ENCODE measurements at regions of chr7 and their contacts with region 1.

Region 1: DNA sequence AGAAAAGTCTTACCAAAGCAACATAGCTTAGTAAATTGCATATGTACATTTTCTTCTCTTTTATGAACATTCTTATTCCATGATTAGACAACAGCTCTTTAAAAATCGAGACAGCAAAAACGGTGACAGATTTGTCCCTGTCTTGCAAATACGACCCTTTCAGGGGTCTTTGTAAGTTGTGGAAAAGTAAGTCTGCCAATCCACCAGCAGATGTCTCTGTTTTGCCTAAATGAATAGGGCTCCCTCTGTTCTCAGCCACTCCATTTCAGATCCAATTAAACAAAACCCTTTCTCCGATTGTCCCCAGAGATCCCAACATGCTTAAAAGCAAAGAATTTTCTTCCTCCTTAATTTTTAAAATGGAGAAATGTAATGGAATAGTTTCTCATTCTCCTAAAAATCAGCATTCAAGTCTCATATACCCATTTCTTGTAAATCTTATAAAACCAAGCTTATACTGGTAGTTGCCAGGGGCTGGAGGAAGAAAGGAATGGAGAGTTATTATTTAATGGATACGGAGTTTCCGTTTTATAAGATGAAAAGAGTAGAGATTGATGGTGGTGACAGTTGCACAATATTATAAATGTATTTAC is 61.0 kb upstream of the NFE2L3 start:
- DNase-seq: peak; percentile 87

Region 2: DNA sequence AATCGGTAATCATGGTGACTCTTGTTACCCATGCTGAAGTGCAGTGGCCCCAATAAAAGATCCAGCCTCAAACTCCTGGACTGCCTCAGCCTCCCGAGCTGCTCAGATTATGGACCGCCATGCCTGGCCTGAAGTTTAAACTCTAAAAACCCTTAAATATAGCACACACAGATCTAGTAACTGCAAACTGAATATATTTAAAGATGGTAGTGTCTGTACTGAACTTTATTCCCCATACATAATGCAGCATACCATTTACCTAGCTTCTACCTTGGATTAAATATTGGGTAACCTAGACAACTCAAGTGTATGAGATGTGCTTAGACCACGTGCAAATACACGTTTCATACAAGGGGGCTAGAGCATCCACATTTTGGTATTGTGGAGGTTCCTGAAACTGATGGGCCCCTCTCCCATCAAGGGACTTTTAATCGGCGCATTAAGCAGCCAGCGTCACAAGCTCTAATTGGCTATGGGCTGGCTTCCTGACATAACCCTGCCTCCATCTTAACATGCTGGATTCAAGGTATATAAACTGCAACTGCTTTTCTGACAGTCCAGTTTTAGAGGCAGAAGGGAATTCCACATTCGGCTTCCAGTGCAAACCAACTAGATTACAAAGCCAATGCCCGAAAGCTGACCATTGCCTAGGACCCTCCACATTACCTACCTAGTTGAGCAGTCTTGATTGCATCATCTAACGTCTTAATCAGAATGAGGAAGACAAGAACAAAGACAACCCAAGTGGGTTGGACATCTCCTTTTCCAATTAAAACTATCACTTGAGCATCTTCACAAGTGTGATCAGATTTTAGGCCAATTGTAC is 96.6 kb after region 1 on chr7:
- in situ Hi-C with region 1: loop called (anchors 10 kb)
- DNase-seq: peak; percentile 56